ENCODE measurements at regions of chr2 and their contacts with region 1.

Region 1: GRCh38 chr2:177332041-177332991 is 60.3 kb upstream of the AGPS start:
- DNase-seq: peak; percentile 60
- H3K4me3 ChIP-seq: no peak overlapping the region
- H3K27ac ChIP-seq: no peak overlapping the region
- H3K4me1 ChIP-seq: peaks cover 10% of the 10 kb centered on the region
- H3K27me3 ChIP-seq: no peaks in the 10 kb centered on the region
- CTCF ChIP-seq: peak; percentile 59 to 67

Region 2: GRCh38 chr2:177229448-177230242 is 102.7 kb before region 1 on chr2:
- CTCF ChIA-PET with region 1: no interaction called
- dilution Hi-C with region 1: no loop called
- in situ Hi-C with region 1: no loop called
- intact Hi-C with region 1: loop called (anchors 2 kb)
- DNase-seq: peak; percentile 81
- H3K4me3 ChIP-seq: no peak overlapping the region
- H3K27ac ChIP-seq: peak overlapping the region; percentile 54
- H3K4me1 ChIP-seq: peaks cover 6% of the 10 kb centered on the region
- H3K27me3 ChIP-seq: no peaks in the 10 kb centered on the region
- CTCF ChIP-seq: no peak

Region 3: DNA sequence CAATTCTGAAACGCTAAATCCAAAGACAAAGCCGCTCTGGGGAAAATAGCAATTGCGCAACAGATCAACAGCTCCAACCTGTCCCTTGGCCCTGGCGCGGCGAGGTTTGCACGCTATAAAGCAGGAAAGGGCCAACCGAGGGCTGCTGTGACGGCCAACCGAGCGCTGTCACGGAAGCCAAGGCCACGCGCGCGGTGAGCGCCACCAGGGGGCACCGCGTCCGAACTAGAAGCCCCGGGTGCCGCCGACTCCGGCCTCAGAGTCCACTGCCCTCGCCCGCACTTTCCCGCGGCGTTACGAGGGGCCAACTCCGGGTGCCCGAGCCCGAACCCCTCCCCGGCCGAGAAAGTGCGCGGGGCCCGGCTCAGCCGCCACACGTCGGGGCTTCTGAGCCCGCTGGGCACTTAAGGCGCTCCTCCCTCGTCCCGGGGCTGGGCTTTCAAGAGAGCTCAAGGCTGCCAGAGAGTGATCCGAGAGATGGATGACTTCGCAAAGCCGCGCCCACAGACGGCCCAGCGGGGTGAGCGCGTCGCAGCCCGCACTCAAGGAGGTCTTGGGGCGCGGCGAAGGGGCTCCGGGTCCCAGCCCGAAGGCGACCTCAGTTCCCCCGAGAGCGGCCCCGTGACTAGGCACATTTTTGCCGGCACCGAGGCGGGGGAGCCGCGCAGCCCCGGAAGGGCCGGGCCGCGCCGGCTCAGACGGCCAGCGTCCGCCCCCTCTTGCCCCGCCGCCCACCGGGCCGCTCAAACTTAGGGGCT is 68.7 kb before region 1 on chr2:
- CTCF ChIA-PET with region 1: no interaction called
- dilution Hi-C with region 1: no loop called
- in situ Hi-C with region 1: loop called (anchors 5 to 10 kb)
- intact Hi-C with region 1: loop called (anchors 1 kb)
- DNase-seq: peak; percentile 99
- H3K4me3 ChIP-seq: peak overlapping the region; percentile 86 to 100 (median 95)
- H3K27ac ChIP-seq: peak overlapping the region; percentile 91
- H3K4me1 ChIP-seq: peaks cover 28% of the 10 kb centered on the region
- H3K27me3 ChIP-seq: no peaks in the 10 kb centered on the region
- CTCF ChIP-seq: peak; percentile 61 to 92

Region 4: GRCh38 chr2:177413703-177414102 is 81.4 kb after region 1 on chr2:
- CTCF ChIA-PET with region 1: interaction called, 3 read pairs
- dilution Hi-C with region 1: loop called (anchors 5 kb)
- in situ Hi-C with region 1: loop called (anchors 5 kb)
- intact Hi-C with region 1: loop called (anchors 1 kb)
- DNase-seq: peak; percentile 29
- H3K4me3 ChIP-seq: no peak overlapping the region
- H3K27ac ChIP-seq: no peak overlapping the region
- H3K4me1 ChIP-seq: peaks cover 5% of the 10 kb centered on the region
- H3K27me3 ChIP-seq: no peaks in the 10 kb centered on the region
- CTCF ChIP-seq: no peak

Region 5: DNA sequence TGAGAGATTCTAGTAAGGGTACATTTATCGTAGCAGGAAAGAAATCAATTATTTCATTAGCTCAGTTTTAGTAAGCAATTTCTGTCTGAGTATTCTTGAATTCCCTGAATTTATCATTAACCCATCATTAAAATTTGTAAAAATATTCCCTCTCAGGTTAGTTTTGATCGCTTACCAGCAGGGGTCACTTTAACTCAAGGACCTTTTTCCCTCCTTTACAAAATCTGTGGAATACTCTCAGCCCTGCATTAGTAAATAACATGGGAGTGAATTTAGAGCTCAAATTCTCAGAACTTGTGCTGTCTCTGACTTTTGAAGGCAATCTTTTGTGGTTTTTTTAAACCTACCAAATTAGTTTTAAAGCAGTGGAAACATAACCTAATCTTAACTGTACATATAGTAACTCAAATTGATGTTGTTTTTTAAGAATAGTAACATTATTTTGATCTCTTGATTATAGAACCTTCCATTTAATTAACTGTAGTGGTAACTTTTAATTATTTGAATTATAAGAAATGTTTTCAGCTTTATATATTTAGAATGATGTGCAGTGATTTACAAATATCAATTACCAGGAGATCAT is 157.5 kb after region 1 on chr2:
- CTCF ChIA-PET with region 1: no interaction called
- dilution Hi-C with region 1: no loop called
- in situ Hi-C with region 1: no loop called
- intact Hi-C with region 1: loop called (anchors 10 kb)
- DNase-seq: no peak
- H3K4me3 ChIP-seq: no peak overlapping the region
- H3K27ac ChIP-seq: no peak overlapping the region
- H3K4me1 ChIP-seq: no peaks in the 10 kb centered on the region
- H3K27me3 ChIP-seq: no peaks in the 10 kb centered on the region
- CTCF ChIP-seq: peak; percentile 48 to 61

Region 6: DNA sequence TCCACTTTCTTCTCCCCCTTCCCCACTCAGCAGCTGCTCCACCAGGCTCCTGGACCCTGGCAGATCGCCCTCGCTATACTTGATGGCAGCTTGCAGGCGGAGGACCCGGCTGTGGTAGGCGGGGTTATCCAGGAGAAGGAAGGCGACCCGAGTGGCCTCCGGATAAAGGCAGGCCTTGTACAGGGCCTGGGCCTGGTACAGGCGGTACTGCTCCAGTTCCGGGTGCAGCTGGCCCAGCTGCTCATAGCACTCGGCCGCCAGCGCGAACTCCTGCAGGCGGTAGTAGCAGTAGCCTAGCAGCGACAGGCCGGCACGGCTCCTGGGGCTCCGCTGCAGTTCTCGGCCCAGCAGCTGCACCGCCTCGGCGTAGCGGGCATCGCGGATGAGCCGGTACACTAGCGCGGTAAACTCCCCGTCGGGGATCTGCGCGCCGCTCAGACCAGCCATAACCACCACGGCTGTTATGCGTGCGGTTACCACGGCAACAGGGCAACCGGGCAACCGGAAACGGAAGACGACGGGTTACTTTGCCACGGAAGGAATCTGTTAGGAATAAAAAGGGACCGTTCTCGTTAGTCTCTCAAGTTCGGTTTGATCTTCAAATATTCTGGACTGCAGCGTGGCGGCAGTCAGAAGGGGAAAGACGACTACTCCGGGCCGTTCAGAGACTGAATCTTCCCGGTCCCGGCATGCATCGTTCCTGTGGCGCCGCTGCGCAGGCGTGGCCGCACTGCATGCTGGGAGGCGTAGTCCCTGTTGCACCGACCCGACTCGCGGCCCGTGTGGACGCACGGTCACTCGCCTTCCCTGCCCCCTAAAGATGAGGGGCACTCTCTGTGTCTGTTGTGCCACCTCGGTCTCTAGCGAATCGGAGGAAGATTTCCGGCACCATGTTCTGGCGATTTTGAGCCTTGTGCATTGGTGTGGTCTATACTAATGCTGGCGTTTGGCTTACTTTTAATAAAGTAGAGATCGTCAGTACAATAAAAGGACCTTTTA is 286.2 kb after region 1 on chr2:
- CTCF ChIA-PET with region 1: no interaction called
- dilution Hi-C with region 1: no loop called
- in situ Hi-C with region 1: loop called in 1 of 2 experiments (anchors 25 kb)
- intact Hi-C with region 1: no loop called
- DNase-seq: peak; percentile 83
- H3K4me3 ChIP-seq: peak overlapping the region; percentile 55 to 82 (median 80)
- H3K27ac ChIP-seq: peak overlapping the region; percentile 99
- H3K4me1 ChIP-seq: peaks cover 4% of the 10 kb centered on the region
- H3K27me3 ChIP-seq: no peaks in the 10 kb centered on the region
- CTCF ChIP-seq: no peak

Region 7: GRCh38 chr2:177763532-177764265 is 431.4 kb after region 1 on chr2:
- CTCF ChIA-PET with region 1: no interaction called
- dilution Hi-C with region 1: no loop called
- in situ Hi-C with region 1: loop called in 1 of 2 experiments (anchors 25 kb)
- intact Hi-C with region 1: loop called (anchors 1 kb)
- DNase-seq: peak; percentile 35
- H3K4me3 ChIP-seq: no peak overlapping the region
- H3K27ac ChIP-seq: no peak overlapping the region
- H3K4me1 ChIP-seq: no peaks in the 10 kb centered on the region
- H3K27me3 ChIP-seq: peaks cover 2% of the 10 kb centered on the region
- CTCF ChIP-seq: peak; percentile 69 to 89

Measured in mammary epithelial cell (primary cell).